ENCODE measurements at regions of chr18 and their contacts with region 1.

Region 1: DNA sequence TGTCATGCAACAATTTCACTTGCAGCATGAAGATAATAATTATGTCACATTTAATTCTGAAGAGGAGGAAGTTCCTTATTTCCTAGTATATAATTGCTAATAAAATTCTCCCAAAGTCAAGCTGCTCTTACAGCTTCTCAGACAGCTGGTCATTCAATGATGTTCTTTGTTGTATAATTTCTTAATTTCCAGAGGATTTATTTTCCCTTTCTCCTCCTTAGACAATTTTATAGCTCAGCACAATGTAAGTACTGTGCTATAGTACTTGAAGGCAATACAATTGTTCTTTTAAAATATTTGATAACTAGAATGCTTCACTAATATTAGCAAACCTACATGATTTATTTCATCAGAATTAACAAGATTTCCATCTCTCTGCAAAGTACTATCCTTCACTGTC is 73.4 kb downstream of the ROCK1 start:
- H3K4me3 Mint-ChIP-seq: no peak overlapping the region
- H3K27ac Mint-ChIP-seq: no peak overlapping the region
- H3K4me1 Mint-ChIP-seq: peaks cover 5% of the 10 kb centered on the region
- H3K27me3 Mint-ChIP-seq: no peaks in the 10 kb centered on the region

Region 2: GRCh38 chr18:21084511-21085078 is 46.4 kb after region 1 on chr18:
- intact Hi-C with region 1: loop called (anchors 5 kb)
- H3K4me3 Mint-ChIP-seq: no peak overlapping the region
- H3K27ac Mint-ChIP-seq: peak overlapping the region; percentile 30
- H3K4me1 Mint-ChIP-seq: peaks cover 60% of the 10 kb centered on the region
- H3K27me3 Mint-ChIP-seq: no peaks in the 10 kb centered on the region

Region 3: GRCh38 chr18:21129566-21130216 is 91.5 kb after region 1 on chr18:
- intact Hi-C with region 1: no loop called
- H3K4me3 Mint-ChIP-seq: no peak overlapping the region
- H3K27ac Mint-ChIP-seq: no peak overlapping the region
- H3K4me1 Mint-ChIP-seq: no peaks in the 10 kb centered on the region
- H3K27me3 Mint-ChIP-seq: no peaks in the 10 kb centered on the region

Region 4: GRCh38 chr18:21179590-21180220 is 141.5 kb after region 1 on chr18:
- intact Hi-C with region 1: loop called (anchors 5 kb)
- H3K4me3 Mint-ChIP-seq: no peak overlapping the region
- H3K27ac Mint-ChIP-seq: no peak overlapping the region
- H3K4me1 Mint-ChIP-seq: peaks cover 23% of the 10 kb centered on the region
- H3K27me3 Mint-ChIP-seq: no peaks in the 10 kb centered on the region